ENCODE measurements at regions of chr14 and their contacts with region 1.

Region 1: GRCh38 chr14:50619556-50620141 is 48.5 kb downstream of the SAV1 start:
- DNase-seq: no peak
- H3K4me3 ChIP-seq: no peak overlapping the region
- H3K27ac ChIP-seq: no peak overlapping the region
- H3K4me1 ChIP-seq: no peaks in the 10 kb centered on the region
- H3K27me3 ChIP-seq: no peaks in the 10 kb centered on the region
- CTCF ChIP-seq: peak; percentile 34 to 61 (median 55)
- POLR2A ChIP-seq: no peak

Region 2: GRCh38 chr14:50301914-50302313 is 317.7 kb before region 1 on chr14:
- intact Hi-C with region 1: no loop called
- DNase-seq: no peak
- H3K4me3 ChIP-seq: no peak overlapping the region
- H3K27ac ChIP-seq: no peak overlapping the region
- H3K4me1 ChIP-seq: no peaks in the 10 kb centered on the region
- H3K27me3 ChIP-seq: no peaks in the 10 kb centered on the region
- CTCF ChIP-seq: no peak
- POLR2A ChIP-seq: no peak

Region 3: DNA sequence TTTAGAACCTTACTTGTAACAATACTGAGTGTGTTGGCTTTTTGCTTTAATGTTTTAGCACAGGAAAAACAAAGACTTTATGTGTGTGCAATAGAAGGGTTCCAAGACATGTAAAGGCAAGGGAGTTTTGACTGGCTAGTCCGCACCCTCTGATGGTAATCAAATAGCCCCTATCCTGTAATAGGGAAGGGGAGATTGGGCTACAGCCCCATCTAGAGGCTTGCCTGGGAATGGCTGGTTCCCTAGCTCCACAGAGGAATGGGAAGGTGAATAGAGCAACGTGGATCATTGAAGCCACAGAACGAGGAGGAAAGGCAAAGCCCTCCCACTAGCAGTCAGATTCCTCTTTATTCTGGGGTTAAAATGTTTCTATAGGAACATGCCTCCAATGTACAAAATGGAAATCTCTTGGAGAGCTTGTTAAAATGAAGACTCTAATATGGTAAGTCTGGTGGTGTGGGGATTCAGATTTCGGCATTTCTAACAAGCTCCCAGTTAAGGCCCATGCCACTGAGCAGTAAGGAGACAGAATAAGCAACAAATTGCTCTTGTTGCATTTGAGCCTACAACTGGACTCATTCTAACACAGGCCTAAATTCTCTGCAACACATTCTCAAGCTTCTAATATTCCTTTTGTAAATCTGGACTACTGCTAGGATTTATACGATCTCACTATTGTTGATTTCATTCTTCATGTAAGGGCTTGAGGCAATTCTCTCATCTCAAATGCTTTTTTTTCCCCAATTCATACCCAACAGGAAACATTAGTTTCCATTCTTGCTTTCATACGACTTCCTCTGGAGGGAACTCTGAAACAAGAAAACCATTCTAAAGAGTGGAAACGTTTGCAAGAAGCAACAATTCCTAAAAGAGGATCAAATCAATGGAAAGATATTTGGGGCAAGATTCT is 154.2 kb after region 1 on chr14:
- intact Hi-C with region 1: loop called (anchors 5 kb)
- DNase-seq: peak; percentile 62
- H3K4me3 ChIP-seq: no peak overlapping the region
- H3K27ac ChIP-seq: peak overlapping the region in 1 of 2 donors; percentile 27
- H3K4me1 ChIP-seq: no peaks in the 10 kb centered on the region
- H3K27me3 ChIP-seq: no peaks in the 10 kb centered on the region
- CTCF ChIP-seq: peak in 2 of 3 experiments; percentile 47 to 76
- POLR2A ChIP-seq: no peak